ENCODE measurements at regions of chr1 and their contacts with region 1.

Region 1: GRCh38 chr1:209354111-209354839 is 229.2 kb upstream of the CAMK1G start:
- DNase-seq: peak; percentile 75
- H3K4me3 ChIP-seq: no peak overlapping the region
- H3K27ac ChIP-seq: no peak overlapping the region
- H3K27me3 ChIP-seq: no peaks in the 10 kb centered on the region
- CTCF ChIP-seq: peak; percentile 96

Region 2: GRCh38 chr1:209207701-209208286 is 146.5 kb before region 1 on chr1:
- CTCF ChIA-PET with region 1: interaction called, 35 read pairs
- POLR2A ChIA-PET with region 1: no interaction called
- DNase-seq: peak; percentile 15
- H3K4me3 ChIP-seq: peak overlapping the region; percentile 28; the same call in 1 of the 2 replicates
- H3K27ac ChIP-seq: no peak overlapping the region
- H3K27me3 ChIP-seq: peaks cover 9% of the 10 kb centered on the region
- CTCF ChIP-seq: peak; percentile 77

Region 3: DNA sequence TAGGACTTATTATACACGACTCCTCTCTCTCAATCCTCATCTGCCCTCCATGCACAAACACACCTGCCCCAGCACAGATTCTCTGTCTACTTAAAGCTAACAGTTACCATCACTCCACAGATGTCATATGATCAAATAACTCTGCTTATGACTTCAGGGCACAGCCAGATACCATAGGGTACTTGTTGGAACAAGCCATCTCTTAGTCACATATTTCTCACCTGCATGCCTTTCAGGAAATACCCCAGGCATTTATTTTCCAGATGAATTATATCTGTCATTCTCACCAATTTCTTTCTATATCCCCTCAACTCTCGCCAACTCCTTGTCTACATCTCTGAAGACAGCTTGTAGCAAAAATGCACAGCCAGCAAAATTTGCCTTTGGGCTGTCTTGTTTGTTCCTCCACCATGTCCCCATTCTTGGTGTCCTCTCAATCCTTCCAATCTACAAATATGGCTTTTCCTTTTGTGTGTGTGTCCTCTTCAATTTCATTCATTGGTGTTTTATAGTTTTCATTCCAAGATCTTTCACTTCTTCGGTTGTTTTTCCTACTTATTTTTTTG is 124.7 kb before region 1 on chr1:
- CTCF ChIA-PET with region 1: no interaction called
- POLR2A ChIA-PET with region 1: no interaction called
- DNase-seq: no peak
- H3K4me3 ChIP-seq: no peak overlapping the region
- H3K27ac ChIP-seq: no peak overlapping the region
- H3K27me3 ChIP-seq: no peaks in the 10 kb centered on the region
- CTCF ChIP-seq: no peak

Region 4: GRCh38 chr1:209335178-209335577 is 19.1 kb before region 1 on chr1:
- CTCF ChIA-PET with region 1: interaction called, 40 read pairs
- POLR2A ChIA-PET with region 1: no interaction called
- DNase-seq: peak; percentile 4
- H3K4me3 ChIP-seq: no peak overlapping the region
- H3K27ac ChIP-seq: no peak overlapping the region
- H3K27me3 ChIP-seq: no peaks in the 10 kb centered on the region
- CTCF ChIP-seq: peak; percentile 89

Region 5: DNA sequence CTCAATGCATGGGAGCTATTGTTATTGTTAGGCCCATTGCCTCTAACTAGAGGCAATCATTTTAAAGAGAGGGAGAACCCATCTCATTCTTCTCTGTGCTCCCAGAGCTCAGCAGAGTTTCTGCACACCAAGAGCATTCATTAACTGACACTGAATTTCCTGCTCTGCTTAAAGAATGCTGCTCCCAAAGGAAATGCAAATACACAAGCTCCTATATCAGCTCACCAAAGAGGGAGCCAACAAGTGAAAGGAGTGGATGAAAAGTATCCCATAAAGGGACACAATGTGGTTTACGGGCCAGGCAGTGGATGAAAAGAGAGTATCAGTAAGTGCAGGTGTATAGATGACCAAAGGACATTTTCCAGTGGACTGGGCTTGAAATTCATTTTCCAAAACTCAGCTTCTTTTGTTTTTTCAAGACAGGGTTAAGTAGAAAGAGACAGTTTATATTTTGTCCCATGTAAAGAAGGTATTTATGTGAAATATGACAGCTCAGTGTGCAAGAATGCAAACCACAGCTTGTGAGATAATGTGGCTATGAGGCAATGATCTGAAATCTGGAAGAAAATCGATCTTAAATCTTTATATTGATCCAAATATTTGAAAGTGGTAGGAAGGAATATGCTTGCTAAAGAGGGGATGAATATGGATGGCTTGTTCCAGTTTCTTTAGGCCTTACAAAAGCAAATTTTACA is 21.5 kb after region 1 on chr1:
- CTCF ChIA-PET with region 1: interaction called, 38 read pairs
- POLR2A ChIA-PET with region 1: no interaction called
- DNase-seq: no peak
- H3K4me3 ChIP-seq: no peak overlapping the region
- H3K27ac ChIP-seq: no peak overlapping the region
- H3K27me3 ChIP-seq: no peaks in the 10 kb centered on the region
- CTCF ChIP-seq: no peak

Region 6: GRCh38 chr1:209397371-209397770 is 43.1 kb after region 1 on chr1:
- CTCF ChIA-PET with region 1: interaction called, 10 read pairs
- POLR2A ChIA-PET with region 1: no interaction called
- DNase-seq: no peak
- H3K4me3 ChIP-seq: no peak overlapping the region
- H3K27ac ChIP-seq: no peak overlapping the region
- H3K27me3 ChIP-seq: no peaks in the 10 kb centered on the region
- CTCF ChIP-seq: no peak

Region 7: GRCh38 chr1:209435654-209436566 is 81.6 kb after region 1 on chr1:
- CTCF ChIA-PET with region 1: interaction called, 17 read pairs
- POLR2A ChIA-PET with region 1: no interaction called
- DNase-seq: peak; percentile 38
- H3K4me3 ChIP-seq: no peak overlapping the region
- H3K27ac ChIP-seq: no peak overlapping the region
- H3K27me3 ChIP-seq: no peaks in the 10 kb centered on the region
- CTCF ChIP-seq: peak; percentile 97